Astrocyte of the cerebellum (primary cell): ENCODE measurements at regions of chr16 and their contacts with region 1.

Region 1: GRCh38 chr16:16109453-16110108 is 113.7 kb downstream of the ABCC6 start:
- DNase-seq: no peak
- H3K4me3 ChIP-seq: no peak overlapping the region
- CTCF ChIP-seq: no peak

Region 2: DNA sequence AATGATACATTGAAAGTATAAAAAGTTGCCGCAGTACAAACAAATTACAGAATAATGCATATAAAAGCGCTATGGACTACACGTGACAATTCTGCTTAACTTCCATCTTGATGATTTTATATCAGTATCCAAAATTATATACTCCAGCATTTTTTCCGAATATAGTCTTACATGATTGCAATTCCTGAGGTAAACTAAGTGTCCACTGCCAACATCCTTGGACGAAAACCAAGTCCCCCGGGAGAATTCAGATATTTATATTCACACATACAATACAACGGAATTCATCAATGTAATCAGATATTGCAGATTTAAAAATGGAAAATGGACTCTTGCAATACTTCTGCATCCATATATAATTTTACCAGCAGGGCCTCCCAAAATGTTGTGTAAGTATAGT is 243.8 kb before region 1 on chr16:
- in situ Hi-C with region 1: loop called (anchors 5 kb)
- DNase-seq: peak; percentile 67
- H3K4me3 ChIP-seq: no peak overlapping the region
- CTCF ChIP-seq: no peak